Activated CD4-positive, alpha-beta memory T cell treated with anti-CD3 and anti-CD28 coated beads, Interleukin-2, amount 10 ng/mL, durations not matched to agents 7 days and 5 days (primary cell): ENCODE measurements at regions of chr7 and their contacts with region 1.

Region 1: DNA sequence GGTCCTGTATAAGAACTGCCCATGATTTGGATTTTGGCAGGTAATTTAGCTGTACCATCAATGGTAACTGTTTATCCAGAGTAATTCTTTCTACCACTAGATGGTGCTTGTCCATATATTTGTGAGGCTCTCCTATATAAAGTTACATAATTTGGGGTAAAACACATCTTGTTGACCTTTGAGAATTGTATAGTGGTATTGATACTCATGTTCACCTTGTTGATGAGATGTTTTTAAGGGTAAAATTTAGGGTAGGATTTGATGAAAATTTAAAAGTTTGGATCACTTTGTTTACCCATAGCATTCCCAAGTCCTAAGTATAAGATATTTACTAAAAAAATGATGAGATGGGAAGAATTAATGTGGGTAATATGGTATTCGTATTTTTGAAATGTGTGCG is 31.6 kb downstream of the ST7 start:
- DNase-seq: no peak
- H3K4me3 Mint-ChIP-seq: no peak overlapping the region
- H3K27ac Mint-ChIP-seq: no peak overlapping the region
- H3K4me1 Mint-ChIP-seq: no peaks in the 10 kb centered on the region
- H3K27me3 Mint-ChIP-seq: no peaks in the 10 kb centered on the region

Region 2: DNA sequence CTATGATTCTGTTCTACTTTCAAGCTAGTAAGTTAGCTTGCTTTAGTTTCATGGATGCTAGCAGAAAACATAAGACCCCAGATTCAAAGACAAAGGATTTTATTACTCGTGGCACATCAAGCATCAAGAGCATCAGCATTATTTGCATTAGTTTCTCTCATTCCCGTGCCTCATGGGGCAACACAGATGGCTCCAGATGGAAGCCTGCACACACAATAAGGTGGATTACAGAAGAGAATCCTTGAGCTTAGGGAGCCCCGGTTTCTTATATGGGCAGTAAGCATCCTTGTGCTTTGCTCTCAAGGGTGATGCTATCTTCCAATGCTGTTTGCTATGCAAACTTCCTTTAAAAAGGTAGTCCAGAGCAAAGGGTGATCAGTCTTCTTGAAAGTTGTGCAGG is 133.2 kb before region 1 on chr7:
- CTCF ChIA-PET with region 1: no interaction called
- POLR2A ChIA-PET with region 1: no interaction called
- DNase-seq: no peak
- H3K4me3 Mint-ChIP-seq: no peak overlapping the region
- H3K27ac Mint-ChIP-seq: no peak overlapping the region
- H3K4me1 Mint-ChIP-seq: no peaks in the 10 kb centered on the region
- H3K27me3 Mint-ChIP-seq: peaks cover 22% of the 10 kb centered on the region

Region 3: DNA sequence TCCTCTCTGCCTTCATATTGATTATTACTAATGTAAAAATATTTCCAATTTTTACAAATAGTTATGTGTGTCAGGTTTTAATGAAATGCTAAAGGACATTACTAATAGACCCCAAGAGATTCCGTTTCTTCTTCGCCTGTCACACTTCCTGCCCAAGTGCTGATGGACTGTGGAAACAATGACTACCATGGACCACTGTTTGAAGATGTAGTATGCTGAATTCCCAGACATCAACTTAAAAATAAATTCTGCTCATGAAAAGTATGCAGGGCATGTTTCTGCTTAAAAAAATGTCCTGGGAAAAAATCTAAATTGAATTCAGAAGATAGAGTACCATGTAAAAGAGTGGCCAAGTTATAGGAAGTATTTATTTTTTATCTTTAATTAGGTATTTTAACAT is 20.5 kb after region 1 on chr7:
- CTCF ChIA-PET with region 1: interaction called, 42 read pairs
- POLR2A ChIA-PET with region 1: interaction called, 7 read pairs
- DNase-seq: no peak
- H3K4me3 Mint-ChIP-seq: no peak overlapping the region
- H3K27ac Mint-ChIP-seq: no peak overlapping the region
- H3K4me1 Mint-ChIP-seq: peaks cover 34% of the 10 kb centered on the region
- H3K27me3 Mint-ChIP-seq: peaks cover 31% of the 10 kb centered on the region

Region 4: GRCh38 chr7:117014673-117015133 is 29.8 kb after region 1 on chr7:
- CTCF ChIA-PET with region 1: interaction called, 42 read pairs
- POLR2A ChIA-PET with region 1: interaction called, 7 read pairs
- DNase-seq: no peak
- H3K4me3 Mint-ChIP-seq: no peak overlapping the region
- H3K27ac Mint-ChIP-seq: no peak overlapping the region
- H3K4me1 Mint-ChIP-seq: peaks cover 35% of the 10 kb centered on the region
- H3K27me3 Mint-ChIP-seq: peaks cover 29% of the 10 kb centered on the region

Region 5: GRCh38 chr7:117043108-117043825 is 58.4 kb after region 1 on chr7:
- CTCF ChIA-PET with region 1: no interaction called
- POLR2A ChIA-PET with region 1: no interaction called
- DNase-seq: no peak
- H3K4me3 Mint-ChIP-seq: no peak overlapping the region
- H3K27ac Mint-ChIP-seq: no peak overlapping the region
- H3K4me1 Mint-ChIP-seq: peaks cover 16% of the 10 kb centered on the region
- H3K27me3 Mint-ChIP-seq: peaks cover 13% of the 10 kb centered on the region

Region 6: DNA sequence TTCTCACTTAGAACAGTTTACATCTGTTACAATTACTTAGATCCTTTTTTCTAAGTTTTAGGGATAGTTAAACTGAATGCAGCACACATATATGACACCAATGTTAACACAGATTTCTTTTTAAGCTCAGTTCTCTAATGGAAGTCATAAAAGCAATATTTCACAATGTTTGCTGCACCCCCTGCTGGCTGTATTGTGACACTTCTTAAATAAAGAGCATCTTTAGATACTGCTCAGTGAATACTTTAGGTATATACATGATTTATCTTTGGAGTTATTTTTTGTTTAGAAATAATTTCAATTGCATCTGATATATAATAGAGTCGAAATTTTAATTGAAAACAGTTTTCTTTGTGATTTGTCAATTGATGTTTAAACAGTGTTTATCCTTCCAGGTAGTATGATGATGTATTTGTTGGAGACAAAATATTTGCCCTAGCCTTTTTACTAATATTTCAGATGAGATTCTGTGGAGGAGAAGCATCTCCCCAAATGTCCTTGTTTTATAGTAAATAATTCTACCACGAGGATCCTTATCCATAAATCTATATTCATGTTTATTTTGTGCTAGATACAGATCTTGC is 142.8 kb after region 1 on chr7:
- CTCF ChIA-PET with region 1: interaction called, 198 read pairs
- POLR2A ChIA-PET with region 1: no interaction called
- DNase-seq: peak; percentile 45
- H3K4me3 Mint-ChIP-seq: no peak overlapping the region
- H3K27ac Mint-ChIP-seq: no peak overlapping the region
- H3K4me1 Mint-ChIP-seq: peaks cover 12% of the 10 kb centered on the region
- H3K27me3 Mint-ChIP-seq: no peaks in the 10 kb centered on the region